Right cardiac atrium (tissue), 5 donors: ENCODE measurements at regions of chr22 and their contacts with region 1.

Region 1: GRCh38 chr22:17628304-17629166 is at the start of gene ATP6V1E1:
- DNase-seq: peak; percentile 96 to 98 (median 98)
- ATAC-seq: peak; percentile 100
- H3K4me3 ChIP-seq: peak within 1 kb of the TSS; percentile 87
- H3K27ac ChIP-seq: peak within 1 kb of the TSS; percentile 100
- H3K4me1 ChIP-seq: no peaks in the 10 kb centered on the region
- H3K27me3 ChIP-seq: no peaks in the 10 kb centered on the region
- total RNA-seq, gene ATP6V1E1: 162 to 199 (median 182) TPM

Region 2: GRCh38 chr22:17552737-17553136 is 75.8 kb before region 1 on chr22:
- intact Hi-C with region 1: loop called in 1 of 4 experiments (anchors 10 kb)
- DNase-seq: peak in 2 of 3 donors; percentile 57 to 68
- ATAC-seq: peak; percentile 77 to 79
- H3K4me3 ChIP-seq: no peak overlapping the region
- H3K27ac ChIP-seq: no peak overlapping the region
- H3K4me1 ChIP-seq: no peaks in the 10 kb centered on the region
- H3K27me3 ChIP-seq: no peaks in the 10 kb centered on the region